Uterus (tissue), 4 donors: ENCODE measurements at regions of chr17 and their contacts with region 1.

Region 1: GRCh38 chr17:1908699-1909309 is 79.0 kb downstream of the RPA1 start:
- DNase-seq: peak; percentile 49 to 55
- H3K4me3 ChIP-seq: no peak overlapping the region
- H3K27ac ChIP-seq: no peak overlapping the region
- H3K4me1 ChIP-seq: peaks cover 0 to 7% of the 10 kb centered on the region in 2 donors
- H3K27me3 ChIP-seq: peaks cover 0 to 18% of the 10 kb centered on the region in 2 donors
- CTCF ChIP-seq: peak; percentile 62 to 83 (median 78)
- POLR2A ChIP-seq: no peak

Region 2: GRCh38 chr17:1752425-1753262 is 156.2 kb before region 1 on chr17:
- intact Hi-C with region 1: no loop called
- DNase-seq: no peak
- H3K4me3 ChIP-seq: no peak overlapping the region
- H3K27ac ChIP-seq: peak overlapping the region in 1 of 2 donors; percentile 52
- H3K4me1 ChIP-seq: peaks cover 0 to 6% of the 10 kb centered on the region in 2 donors
- H3K27me3 ChIP-seq: no peaks in the 10 kb centered on the region
- CTCF ChIP-seq: no peak
- POLR2A ChIP-seq: no peak

Region 3: GRCh38 chr17:2023692-2024571 is 115.1 kb after region 1 on chr17:
- intact Hi-C with region 1: loop called (anchors 5 kb)
- DNase-seq: peak; percentile 54 to 61
- H3K4me3 ChIP-seq: peak overlapping the region; percentile 38 to 44
- H3K27ac ChIP-seq: no peak overlapping the region
- H3K4me1 ChIP-seq: peaks cover 0 to 17% of the 10 kb centered on the region in 2 donors
- H3K27me3 ChIP-seq: no peaks in the 10 kb centered on the region
- CTCF ChIP-seq: no peak
- POLR2A ChIP-seq: peak in 1 of 2 donors; percentile 13